ENCODE measurements at regions of chr14 and their contacts with region 1.

Region 1: DNA sequence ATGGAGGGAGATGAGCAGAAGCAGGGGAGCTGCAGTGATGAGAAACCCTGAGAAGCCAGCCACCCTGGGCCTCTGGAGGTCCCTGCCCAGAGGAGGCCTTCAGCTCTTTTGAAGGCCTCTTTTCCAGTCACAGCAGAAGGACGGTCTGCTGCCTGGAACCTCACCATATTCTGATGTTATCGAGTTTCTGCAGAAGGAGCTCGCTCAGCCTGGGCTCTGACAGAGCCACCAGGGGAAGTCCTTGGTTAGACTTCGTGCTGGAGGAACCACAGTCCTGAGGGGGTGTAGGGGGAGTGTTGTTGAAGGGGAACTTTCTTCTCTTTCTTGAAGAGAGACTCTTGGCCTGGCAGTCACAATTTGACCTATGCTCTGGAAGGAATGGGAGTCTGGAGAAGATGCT is 25.1 kb upstream of the BATF start:
- DNase-seq: no peak

Region 2: DNA sequence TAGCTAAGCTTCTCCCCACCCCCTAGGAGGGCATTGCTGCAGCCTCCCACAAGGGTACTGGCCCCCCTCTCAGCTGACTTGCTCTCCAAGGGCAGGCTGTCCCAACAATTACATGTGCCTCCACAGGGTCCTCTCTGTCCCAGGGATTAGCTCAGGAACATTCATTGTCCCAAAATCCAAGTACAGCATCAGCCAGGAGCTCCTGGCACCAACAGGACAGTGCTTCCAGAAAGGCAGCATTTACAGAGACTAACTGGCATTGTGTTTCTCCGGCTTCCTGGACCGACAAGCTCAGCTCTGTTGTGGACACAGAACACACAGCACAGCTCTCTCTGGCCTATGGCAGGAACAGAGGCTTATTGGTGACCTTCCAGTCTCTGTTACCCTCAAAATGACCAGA is 1216.1 kb before region 1 on chr14:
- intact Hi-C with region 1: no loop called
- DNase-seq: no peak

Region 3: GRCh38 chr14:75126679-75127473 is 370.3 kb before region 1 on chr14 and contains the start of gene NEK9:
- intact Hi-C with region 1: loop called in 1 of 2 experiments (anchors 10 kb)
- DNase-seq: peak; percentile 97
- total RNA-seq, gene NEK9: 68.7 to 86.2 TPM

Measured in posterior vena cava (tissue), 2 donors.